Activated CD4-positive, alpha-beta T cell treated with anti-CD3 and anti-CD28 coated beads, Interleukin-2, amount 10 ng/mL, durations not matched to agents 24 days and 14 days (primary cell): ENCODE measurements at regions of chr11 and their contacts with region 1.

Region 1: GRCh38 chr11:117026593-117027330 is 71.5 kb downstream of the SIK3 start:
- DNase-seq: peak; percentile 53
- H3K4me3 Mint-ChIP-seq: peak overlapping the region; percentile 36
- H3K27ac Mint-ChIP-seq: peak overlapping the region; percentile 92
- H3K4me1 Mint-ChIP-seq: peaks cover 54% of the 10 kb centered on the region
- H3K27me3 Mint-ChIP-seq: no peaks in the 10 kb centered on the region

Region 2: DNA sequence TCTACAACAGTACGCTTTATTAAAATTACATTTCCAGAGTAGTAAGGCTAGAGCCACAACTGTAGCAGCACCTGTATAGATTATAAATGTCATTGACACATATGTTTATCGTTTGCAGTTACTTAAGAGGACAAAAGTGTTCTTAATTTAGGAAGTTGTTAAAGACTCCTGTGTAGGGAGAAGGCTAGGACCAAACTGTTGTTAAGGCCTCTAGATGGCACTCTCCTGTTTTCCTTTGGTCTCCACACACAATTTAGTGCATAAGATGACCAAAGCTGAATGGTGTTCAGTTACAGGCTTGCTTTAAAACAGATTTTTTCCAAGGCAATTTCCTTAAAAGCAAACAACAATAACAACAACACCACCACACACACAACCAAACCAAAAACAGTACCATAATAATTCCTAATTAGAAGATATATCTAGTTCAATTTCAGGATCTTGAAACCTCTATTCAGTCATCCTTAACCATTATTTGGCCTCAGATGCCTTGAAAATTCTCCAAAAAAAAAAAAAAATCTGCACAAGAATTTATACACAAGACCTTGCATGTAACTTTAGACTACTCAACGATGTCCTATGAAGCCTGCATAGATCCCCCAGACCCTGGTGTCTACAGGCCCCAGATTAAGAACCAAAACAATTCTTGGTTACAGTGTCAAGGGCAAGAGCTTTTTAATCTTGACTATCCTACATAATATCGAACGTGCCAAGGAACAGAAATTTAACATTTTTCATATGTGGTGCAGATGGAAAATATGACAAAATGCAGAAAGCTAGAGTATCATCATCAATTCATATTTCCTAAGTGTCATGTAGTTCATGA is 146.7 kb before region 1 on chr11:
- intact Hi-C with region 1: loop called (anchors 5 kb)
- DNase-seq: peak; percentile 80
- H3K4me3 Mint-ChIP-seq: no peak overlapping the region
- H3K27ac Mint-ChIP-seq: no peak overlapping the region
- H3K4me1 Mint-ChIP-seq: peaks cover 15% of the 10 kb centered on the region
- H3K27me3 Mint-ChIP-seq: no peaks in the 10 kb centered on the region

Region 3: DNA sequence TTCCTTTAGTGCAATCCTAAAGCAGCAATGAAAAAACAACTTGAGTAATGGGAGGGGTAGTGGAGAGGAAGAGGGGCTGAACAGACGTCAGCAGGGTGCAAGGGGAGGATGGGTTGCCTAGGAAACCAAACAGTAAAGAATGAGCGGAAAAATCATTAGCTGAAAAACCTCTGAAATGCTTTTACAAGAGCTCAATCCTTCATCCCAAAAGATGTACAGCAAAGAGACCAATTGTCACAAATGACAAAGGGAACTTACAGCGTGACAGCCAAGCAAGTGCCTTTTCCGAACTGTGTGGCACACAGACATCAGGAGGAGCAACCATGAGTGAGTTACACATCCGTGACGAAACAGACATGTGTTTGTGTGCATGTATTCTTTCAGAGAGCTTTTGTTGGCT is 33.2 kb before region 1 on chr11:
- intact Hi-C with region 1: no loop called
- DNase-seq: peak; percentile 64
- H3K4me3 Mint-ChIP-seq: no peak overlapping the region
- H3K27ac Mint-ChIP-seq: peak overlapping the region; percentile 45
- H3K4me1 Mint-ChIP-seq: peaks cover 30% of the 10 kb centered on the region
- H3K27me3 Mint-ChIP-seq: no peaks in the 10 kb centered on the region

Region 4: GRCh38 chr11:117037279-117037974 is 10.7 kb after region 1 on chr11:
- intact Hi-C with region 1: loop called (anchors 1 kb)
- DNase-seq: peak; percentile 61
- H3K4me3 Mint-ChIP-seq: no peak overlapping the region
- H3K27ac Mint-ChIP-seq: peak overlapping the region; percentile 49
- H3K4me1 Mint-ChIP-seq: peaks cover 40% of the 10 kb centered on the region
- H3K27me3 Mint-ChIP-seq: no peaks in the 10 kb centered on the region

Region 5: GRCh38 chr11:117072517-117073461 is 46.0 kb after region 1 on chr11:
- intact Hi-C with region 1: loop called (anchors 2 kb)
- DNase-seq: no peak
- H3K4me3 Mint-ChIP-seq: peak overlapping the region; percentile 26
- H3K27ac Mint-ChIP-seq: peak overlapping the region; percentile 82
- H3K4me1 Mint-ChIP-seq: peaks cover 36% of the 10 kb centered on the region
- H3K27me3 Mint-ChIP-seq: no peaks in the 10 kb centered on the region

Region 6: GRCh38 chr11:117273550-117274289 is 247.0 kb after region 1 on chr11:
- intact Hi-C with region 1: no loop called
- DNase-seq: no peak
- H3K4me3 Mint-ChIP-seq: no peak overlapping the region
- H3K27ac Mint-ChIP-seq: no peak overlapping the region
- H3K4me1 Mint-ChIP-seq: no peaks in the 10 kb centered on the region
- H3K27me3 Mint-ChIP-seq: no peaks in the 10 kb centered on the region

Region 7: GRCh38 chr11:117410861-117411710 is 384.3 kb after region 1 on chr11:
- intact Hi-C with region 1: no loop called
- DNase-seq: no peak
- H3K4me3 Mint-ChIP-seq: no peak overlapping the region
- H3K27ac Mint-ChIP-seq: no peak overlapping the region
- H3K4me1 Mint-ChIP-seq: no peaks in the 10 kb centered on the region
- H3K27me3 Mint-ChIP-seq: no peaks in the 10 kb centered on the region